Cardiac septum (tissue), 1 donor: ENCODE measurements at regions of chr17 and their contacts with region 1.

Region 1: DNA sequence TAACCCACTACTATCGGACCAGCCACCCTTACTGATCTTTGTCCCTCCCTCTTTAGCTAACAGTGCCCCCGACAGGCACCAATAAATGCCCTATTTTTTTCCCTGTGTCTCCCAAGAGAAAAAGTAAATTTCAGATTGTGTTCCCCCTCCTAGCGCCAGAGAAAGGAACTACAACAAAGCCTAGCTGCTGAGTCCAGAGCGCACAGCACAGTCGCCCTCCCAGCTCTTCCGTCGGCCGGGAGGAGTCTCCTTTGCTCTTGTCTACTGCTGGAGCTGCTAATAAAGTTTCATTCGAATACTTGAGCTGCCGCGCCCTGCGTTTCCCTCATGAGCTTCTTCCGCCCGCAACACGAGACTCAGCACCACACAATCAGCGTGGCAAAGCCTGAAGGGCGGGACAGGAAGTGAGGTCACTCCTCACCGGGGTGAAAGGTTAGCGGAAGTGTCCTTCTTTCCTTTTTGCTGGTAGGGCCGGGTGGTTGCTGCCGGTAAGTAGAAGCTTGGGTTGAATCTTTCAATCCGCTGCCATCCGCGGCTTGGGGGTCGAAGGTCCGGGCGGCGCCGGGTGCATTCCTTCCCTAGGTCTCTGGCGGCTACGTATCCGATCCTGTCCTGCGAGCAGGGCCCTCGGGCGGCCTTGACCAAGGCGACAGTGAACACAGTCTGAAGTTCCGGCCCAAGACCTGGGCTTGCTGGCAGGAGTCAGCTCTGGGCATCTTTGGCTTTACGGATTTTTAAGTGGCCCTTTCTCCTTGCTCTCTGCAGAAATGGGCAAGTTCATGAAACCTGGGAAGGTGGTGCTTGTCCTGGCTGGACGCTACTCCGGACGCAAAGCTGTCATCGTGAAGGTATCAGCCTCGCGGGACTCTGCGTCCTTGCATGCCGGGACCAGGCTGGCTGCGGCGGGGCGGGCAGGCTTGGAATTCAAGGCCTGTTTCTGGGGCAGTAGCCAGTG is at the start of gene RPL27:
- DNase-seq: peak; percentile 98
- total RNA-seq, gene RPL27: 536 TPM

Region 2: GRCh38 chr17:42153919-42154742 is 844.1 kb before region 1 on chr17:
- intact Hi-C with region 1: loop called (anchors 10 kb)
- DNase-seq: no peak

Region 3: DNA sequence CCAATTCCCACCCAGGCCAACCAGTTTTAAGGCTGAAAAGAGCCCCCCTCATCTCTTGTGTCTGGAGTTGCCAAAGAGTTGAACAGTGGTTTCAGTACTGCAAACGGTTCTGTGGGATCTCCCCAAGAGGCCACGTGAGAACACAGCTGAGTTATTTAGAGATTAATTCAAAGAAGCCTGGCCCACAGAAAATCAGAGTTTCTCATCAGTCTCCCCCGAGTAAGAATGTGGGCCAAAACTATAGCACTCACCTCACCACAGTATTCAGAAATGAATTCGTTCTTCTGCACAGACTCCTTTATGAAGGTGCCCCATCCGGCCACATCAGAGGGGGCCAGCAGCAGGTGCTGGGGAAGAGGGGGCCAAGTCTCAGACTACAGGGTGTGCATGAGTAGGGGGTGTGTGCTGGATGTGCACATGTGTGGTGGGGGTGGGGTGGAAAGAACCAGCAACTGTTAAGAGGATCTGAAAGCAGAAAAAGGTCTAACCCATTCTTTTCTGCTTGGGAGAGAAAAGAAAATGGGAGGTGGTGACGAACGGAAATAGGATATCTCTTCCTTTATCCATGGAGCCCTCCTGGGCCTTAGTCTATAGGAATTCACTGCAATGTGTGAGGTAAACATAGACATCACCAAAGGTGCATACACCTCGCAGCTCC is 293.3 kb before region 1 on chr17:
- intact Hi-C with region 1: no loop called
- DNase-seq: peak; percentile 35

Region 4: DNA sequence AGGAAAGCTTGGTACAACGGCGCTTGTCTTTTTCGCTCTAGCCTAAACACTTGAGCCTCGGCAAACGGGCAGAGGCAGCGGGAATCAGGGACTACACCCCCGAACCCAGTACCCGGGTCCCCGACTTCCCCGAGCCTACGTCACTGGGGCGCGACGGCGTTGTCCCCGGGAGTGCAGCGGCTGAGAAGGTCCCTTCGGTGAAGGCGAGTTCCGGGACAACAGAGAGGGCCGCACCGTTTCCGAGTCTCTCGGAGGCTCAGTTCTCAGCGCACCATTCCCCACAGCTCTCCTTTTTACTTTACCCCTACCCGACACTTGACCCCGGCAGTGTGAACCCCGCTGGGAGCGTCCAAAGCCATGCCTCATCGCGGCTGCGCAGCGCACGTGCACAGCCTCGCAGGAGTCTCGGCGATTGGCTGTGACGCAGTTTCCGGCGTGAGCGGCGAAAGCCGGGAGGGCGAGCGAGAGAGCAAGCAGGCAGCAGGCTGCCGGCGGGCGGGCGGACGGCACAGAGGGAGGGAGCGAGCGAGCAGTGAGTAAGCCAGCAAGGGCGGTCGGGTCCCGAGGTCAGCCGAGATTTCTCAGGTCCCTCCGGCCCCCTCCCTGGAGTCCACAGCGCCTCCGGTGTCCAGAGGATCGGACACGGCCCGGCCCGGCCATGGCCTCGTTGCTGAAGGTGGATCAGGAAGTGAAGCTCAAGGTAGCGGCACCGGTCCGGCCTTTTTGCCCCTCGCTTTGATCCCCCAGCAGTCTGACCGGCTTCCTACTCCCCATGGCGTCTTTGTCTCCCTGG is 165.1 kb before region 1 on chr17 and contains the start of gene PSME3:
- intact Hi-C with region 1: loop called (anchors 5 kb)
- DNase-seq: peak; percentile 96
- total RNA-seq, gene PSME3: 66.9 TPM

Region 5: GRCh38 chr17:42964161-42964932 is 33.9 kb before region 1 on chr17 and contains the start of gene AARSD1:
- intact Hi-C with region 1: loop called (anchors 5 kb)
- DNase-seq: peak; percentile 95
- total RNA-seq, gene AARSD1: 27.0 TPM

Region 6: DNA sequence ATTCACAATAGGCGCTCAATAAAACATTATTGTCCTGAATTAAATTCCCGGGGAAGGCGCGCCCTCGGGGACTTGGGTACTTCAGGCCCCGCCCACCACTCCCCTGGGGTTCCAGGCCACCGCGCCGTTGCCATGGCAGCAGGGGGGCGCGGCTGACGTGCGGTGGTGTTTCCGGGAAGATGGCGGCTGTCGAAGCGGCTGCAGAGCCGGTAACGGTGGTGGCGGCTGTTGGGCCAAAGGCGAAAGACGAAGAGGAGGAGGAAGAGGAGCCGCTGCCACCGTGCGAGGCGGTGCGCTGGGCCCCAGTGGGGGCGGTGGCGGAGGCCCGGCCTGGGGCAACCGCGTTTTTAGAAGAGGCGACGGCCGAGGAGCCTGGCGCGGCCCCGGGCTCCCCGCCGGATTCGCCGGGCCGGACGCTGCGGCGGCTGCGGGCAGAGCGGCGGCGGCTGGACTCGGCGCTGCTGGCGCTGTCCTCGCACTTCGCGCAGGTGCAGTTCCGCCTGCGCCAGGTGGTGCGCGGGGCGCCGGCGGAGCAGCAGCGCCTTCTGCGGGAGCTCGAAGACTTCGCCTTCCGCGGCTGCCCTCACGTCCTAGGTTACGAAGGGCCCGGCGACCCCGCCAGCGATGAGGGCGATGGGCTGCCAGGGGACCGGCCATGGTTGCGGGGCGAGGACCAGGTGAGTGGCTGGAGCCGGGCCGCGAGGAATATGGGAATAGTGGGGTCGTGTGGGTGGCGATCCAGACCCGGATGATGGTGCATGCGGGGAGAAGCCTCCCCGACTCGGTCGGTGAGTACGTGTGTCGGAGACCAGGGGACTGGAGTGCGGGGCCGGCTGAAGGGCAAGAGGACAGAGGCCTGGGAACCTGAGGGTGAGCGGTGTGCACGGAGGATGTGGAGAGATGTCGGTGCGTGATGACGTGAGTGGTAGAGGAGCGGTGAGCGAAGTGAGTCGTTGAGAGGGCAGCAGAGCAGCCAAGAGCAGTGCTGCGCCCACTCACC is 17.6 kb before region 1 on chr17 and contains the start of gene RUNDC1:
- intact Hi-C with region 1: loop called (anchors 2 kb)
- DNase-seq: peak; percentile 97
- total RNA-seq, gene RUNDC1: 14.8 TPM

Region 7: GRCh38 chr17:43170766-43171585 is 172.7 kb after region 1 on chr17 and contains the start of gene NBR1:
- intact Hi-C with region 1: loop called (anchors 5 kb)
- DNase-seq: peak; percentile 96
- total RNA-seq, gene NBR1: 97.6 TPM